PC-3 (cell line): ENCODE measurements at regions of chr12 and their contacts with region 1.

Region 1: GRCh38 chr12:75225546-75225945 is 15.9 kb upstream of the KCNC2 start:
- DNase-seq: peak; percentile 30
- ATAC-seq: peak; percentile 71
- H3K4me3 ChIP-seq: no peak overlapping the region
- H3K27ac ChIP-seq: no peak overlapping the region
- H3K4me1 ChIP-seq: peaks cover 9% of the 10 kb centered on the region
- H3K27me3 ChIP-seq: no peaks in the 10 kb centered on the region
- CTCF ChIP-seq: no peak

Region 2: GRCh38 chr12:75205558-75205957 is 20.0 kb before region 1 on chr12:
- CTCF ChIA-PET with region 1: interaction called, 11 read pairs
- POLR2A ChIA-PET with region 1: no interaction called
- intact Hi-C with region 1: no loop called
- DNase-seq: no peak
- ATAC-seq: no peak
- H3K4me3 ChIP-seq: no peak overlapping the region
- H3K27ac ChIP-seq: no peak overlapping the region
- H3K4me1 ChIP-seq: no peaks in the 10 kb centered on the region
- H3K27me3 ChIP-seq: no peaks in the 10 kb centered on the region
- CTCF ChIP-seq: no peak